Activated B cell treated with CpG ODN at 0.5 μM for 24 hours (primary cell): ENCODE measurements at regions of chr1 and their contacts with region 1.

Region 1: GRCh38 chr1:219201656-219202055 is 28.0 kb downstream of the LYPLAL1 start:
- DNase-seq: no peak
- ATAC-seq: no peak
- H3K4me3 Mint-ChIP-seq: no peak overlapping the region
- H3K27ac Mint-ChIP-seq: no peak overlapping the region
- H3K4me1 Mint-ChIP-seq: peaks cover 3% of the 10 kb centered on the region
- H3K27me3 Mint-ChIP-seq: no peaks in the 10 kb centered on the region
- CTCF ChIP-seq: no peak

Region 2: GRCh38 chr1:219138747-219139146 is 62.9 kb before region 1 on chr1:
- CTCF ChIA-PET with region 1: no interaction called
- POLR2A ChIA-PET with region 1: no interaction called
- intact Hi-C with region 1: loop called (anchors 5 kb)
- DNase-seq: no peak
- ATAC-seq: no peak
- H3K4me3 Mint-ChIP-seq: no peak overlapping the region
- H3K27ac Mint-ChIP-seq: no peak overlapping the region
- H3K4me1 Mint-ChIP-seq: no peaks in the 10 kb centered on the region
- H3K27me3 Mint-ChIP-seq: no peaks in the 10 kb centered on the region
- CTCF ChIP-seq: no peak

Region 3: GRCh38 chr1:219189021-219189824 is 12.4 kb before region 1 on chr1:
- CTCF ChIA-PET with region 1: interaction called, 3 read pairs
- POLR2A ChIA-PET with region 1: interaction called, 4 read pairs
- intact Hi-C with region 1: loop called (anchors 1 kb)
- DNase-seq: no peak
- ATAC-seq: peak; percentile 61
- H3K4me3 Mint-ChIP-seq: peak overlapping the region; percentile 74
- H3K27ac Mint-ChIP-seq: peak overlapping the region; percentile 91
- H3K4me1 Mint-ChIP-seq: peaks cover 61% of the 10 kb centered on the region
- H3K27me3 Mint-ChIP-seq: no peaks in the 10 kb centered on the region
- CTCF ChIP-seq: no peak

Region 4: DNA sequence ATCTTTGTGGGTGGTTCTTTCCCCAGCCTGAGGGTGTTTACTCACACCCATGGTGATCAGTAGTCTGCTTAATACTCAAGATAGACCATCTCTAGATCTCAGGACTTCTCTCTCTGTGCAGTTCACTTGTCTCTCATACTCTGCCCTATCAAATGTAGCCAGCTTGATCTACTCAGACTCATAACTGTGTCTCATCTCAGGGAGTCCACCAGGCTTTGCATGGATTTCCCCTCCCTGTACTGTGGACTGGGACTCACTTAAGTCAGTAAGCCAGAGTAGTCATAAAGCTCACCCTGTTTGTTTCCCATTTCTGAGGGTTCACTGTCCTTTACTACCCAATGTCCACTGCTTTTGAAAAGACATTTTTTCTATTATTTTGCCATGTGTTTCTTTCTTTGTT is 13.8 kb after region 1 on chr1:
- CTCF ChIA-PET with region 1: no interaction called
- POLR2A ChIA-PET with region 1: no interaction called
- intact Hi-C with region 1: no loop called
- DNase-seq: no peak
- ATAC-seq: no peak
- H3K4me3 Mint-ChIP-seq: no peak overlapping the region
- H3K27ac Mint-ChIP-seq: peak overlapping the region; percentile 5
- H3K4me1 Mint-ChIP-seq: no peaks in the 10 kb centered on the region
- H3K27me3 Mint-ChIP-seq: no peaks in the 10 kb centered on the region
- CTCF ChIP-seq: no peak